ENCODE measurements at regions of chr19 and their contacts with region 1.

Region 1: GRCh38 chr19:5827891-5828660 is 11.4 kb downstream of the FUT6 start:
- DNase-seq: peak; percentile 98
- ATAC-seq: peak; percentile 84
- H3K4me3 Mint-ChIP-seq: peak overlapping the region; percentile 92
- H3K27ac Mint-ChIP-seq: peak overlapping the region; percentile 96
- H3K4me1 Mint-ChIP-seq: peaks cover 4% of the 10 kb centered on the region
- H3K27me3 Mint-ChIP-seq: no peaks in the 10 kb centered on the region

Region 2: GRCh38 chr19:4007021-4007835 is 1820.8 kb before region 1 on chr19 and contains the start of gene PIAS4:
- CTCF ChIA-PET with region 1: no interaction called
- POLR2A ChIA-PET with region 1: no interaction called
- intact Hi-C with region 1: loop called in 1 of 2 experiments (anchors 5 kb)
- DNase-seq: peak; percentile 97
- ATAC-seq: peak; percentile 92
- H3K4me3 Mint-ChIP-seq: peak within 1 kb of the TSS; percentile 75
- H3K27ac Mint-ChIP-seq: peak within 1 kb of the TSS; percentile 71
- H3K4me1 Mint-ChIP-seq: peaks cover 27% of the 10 kb centered on the region
- H3K27me3 Mint-ChIP-seq: no peaks in the 10 kb centered on the region
- total RNA-seq, gene PIAS4: 23.0 to 37.3 TPM

Region 3: GRCh38 chr19:4939466-4939865 is 888.6 kb before region 1 on chr19:
- CTCF ChIA-PET with region 1: no interaction called
- POLR2A ChIA-PET with region 1: no interaction called
- intact Hi-C with region 1: no loop called
- DNase-seq: no peak
- ATAC-seq: no peak
- H3K4me3 Mint-ChIP-seq: no peak overlapping the region
- H3K27ac Mint-ChIP-seq: no peak overlapping the region
- H3K4me1 Mint-ChIP-seq: no peaks in the 10 kb centered on the region
- H3K27me3 Mint-ChIP-seq: no peaks in the 10 kb centered on the region

Region 4: DNA sequence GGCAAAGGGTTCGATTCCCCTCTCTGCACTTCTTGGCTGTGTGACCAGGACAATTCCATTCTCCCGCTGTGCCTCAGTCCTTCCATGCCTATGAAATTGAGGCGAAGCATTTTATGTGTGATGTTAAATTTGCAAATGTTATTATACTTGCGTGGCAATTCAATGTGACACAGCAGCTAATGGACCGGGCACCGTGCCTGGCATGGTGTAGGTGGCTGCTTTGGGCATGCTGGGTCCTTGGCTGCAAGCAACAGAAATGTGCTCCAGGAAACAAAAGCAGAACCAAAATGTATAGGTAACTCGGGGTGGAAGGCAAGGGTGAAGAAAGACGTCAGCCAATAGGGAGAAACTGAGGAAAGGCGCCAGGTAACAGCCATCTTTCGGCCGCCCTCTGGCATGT is 297.4 kb before region 1 on chr19:
- CTCF ChIA-PET with region 1: no interaction called
- POLR2A ChIA-PET with region 1: no interaction called
- intact Hi-C with region 1: no loop called
- DNase-seq: no peak
- ATAC-seq: no peak
- H3K4me3 Mint-ChIP-seq: no peak overlapping the region
- H3K27ac Mint-ChIP-seq: no peak overlapping the region
- H3K4me1 Mint-ChIP-seq: no peaks in the 10 kb centered on the region
- H3K27me3 Mint-ChIP-seq: peaks cover 14% of the 10 kb centered on the region

Region 5: GRCh38 chr19:5680437-5681368 is 147.4 kb before region 1 on chr19 and contains the starts of genes HSD11B1L and MICOS13:
- CTCF ChIA-PET with region 1: no interaction called
- POLR2A ChIA-PET with region 1: no interaction called
- intact Hi-C with region 1: loop called in 1 of 2 experiments (anchors 1 kb)
- DNase-seq: peak; percentile 99
- ATAC-seq: peak; percentile 97
- H3K4me3 Mint-ChIP-seq: peak within 1 kb of the TSS; percentile 99
- H3K27ac Mint-ChIP-seq: peak within 1 kb of the TSS; percentile 94
- H3K4me1 Mint-ChIP-seq: peaks cover 20% of the 10 kb centered on the region
- H3K27me3 Mint-ChIP-seq: no peaks in the 10 kb centered on the region
- total RNA-seq, gene HSD11B1L: 2.0 to 3.2 TPM
- total RNA-seq, gene MICOS13: 50.9 to 52.1 TPM

Region 6: DNA sequence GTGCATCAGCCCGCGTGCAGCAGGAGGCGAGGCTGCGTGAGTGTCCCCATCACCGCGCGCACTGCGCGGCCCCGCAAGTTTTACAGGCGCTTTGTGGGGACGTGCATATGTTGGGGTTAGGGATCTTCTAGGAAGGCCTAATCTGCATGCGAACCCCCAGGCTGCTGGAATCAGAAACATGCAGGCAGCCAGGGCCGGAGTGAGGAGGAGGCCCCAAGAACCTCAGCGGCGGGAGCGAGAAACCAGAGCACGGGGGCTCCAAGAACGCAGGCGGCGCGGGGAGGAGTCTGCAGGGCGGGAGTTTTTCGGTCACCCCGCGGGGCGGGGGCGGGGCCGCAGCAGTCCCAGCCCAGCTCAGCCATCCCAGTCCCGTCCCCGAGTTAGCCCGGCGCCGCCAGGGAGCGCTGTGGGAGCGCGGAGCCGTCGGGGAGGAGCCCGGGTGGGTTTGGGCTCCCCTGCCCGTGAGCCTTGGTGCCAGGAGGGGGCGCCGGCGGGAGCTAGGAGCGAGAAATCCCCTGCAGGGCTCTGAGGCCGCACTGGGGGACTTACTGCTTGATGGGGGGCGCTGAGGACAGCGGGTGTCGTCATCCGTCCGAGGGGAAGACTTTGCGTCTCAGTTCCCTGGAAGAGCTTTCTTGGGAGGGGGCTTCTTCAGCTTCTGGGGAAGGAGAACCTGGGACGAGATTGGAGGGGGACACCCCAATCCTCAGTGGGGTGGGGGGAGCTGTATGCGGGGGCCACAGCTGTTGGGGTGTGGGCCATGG is 24.1 kb before region 1 on chr19:
- CTCF ChIA-PET with region 1: interaction called, 33 read pairs
- POLR2A ChIA-PET with region 1: interaction called, 18 read pairs
- intact Hi-C with region 1: loop called (anchors 1 kb)
- DNase-seq: peak; percentile 98
- ATAC-seq: peak; percentile 97
- H3K4me3 Mint-ChIP-seq: peak overlapping the region; percentile 63
- H3K27ac Mint-ChIP-seq: peak overlapping the region; percentile 47
- H3K4me1 Mint-ChIP-seq: peaks cover 21% of the 10 kb centered on the region
- H3K27me3 Mint-ChIP-seq: peaks cover 20% of the 10 kb centered on the region

Region 7: GRCh38 chr19:5864725-5865486 is 36.8 kb after region 1 on chr19:
- CTCF ChIA-PET with region 1: no interaction called
- POLR2A ChIA-PET with region 1: no interaction called
- intact Hi-C with region 1: no loop called
- DNase-seq: no peak
- ATAC-seq: no peak
- H3K4me3 Mint-ChIP-seq: no peak overlapping the region
- H3K27ac Mint-ChIP-seq: no peak overlapping the region
- H3K4me1 Mint-ChIP-seq: no peaks in the 10 kb centered on the region
- H3K27me3 Mint-ChIP-seq: peaks cover 2% of the 10 kb centered on the region

Region 8: GRCh38 chr19:6199240-6199983 is 371.3 kb after region 1 on chr19:
- CTCF ChIA-PET with region 1: no interaction called
- POLR2A ChIA-PET with region 1: no interaction called
- intact Hi-C with region 1: loop called in 1 of 2 experiments (anchors 1 kb)
- DNase-seq: peak; percentile 100
- ATAC-seq: peak; percentile 95
- H3K4me3 Mint-ChIP-seq: peak overlapping the region; percentile 100
- H3K27ac Mint-ChIP-seq: peak overlapping the region; percentile 92
- H3K4me1 Mint-ChIP-seq: peaks cover 12% of the 10 kb centered on the region
- H3K27me3 Mint-ChIP-seq: no peaks in the 10 kb centered on the region

Measured in activated CD4-positive, alpha-beta T cell treated with anti-CD3 and anti-CD28 coated beads for 36 hours (primary cell).